PC-9 (cell line): ENCODE measurements at regions of chr9 and their contacts with region 1.

Region 1: GRCh38 chr9:4297151-4297785 is 2.6 kb downstream of the GLIS3 start:
- DNase-seq: peak; percentile 63 to 69
- H3K4me3 ChIP-seq: peak overlapping the region; percentile 90
- H3K27ac ChIP-seq: peak overlapping the region; percentile 94
- H3K4me1 ChIP-seq: peaks cover 48% of the 10 kb centered on the region
- H3K27me3 ChIP-seq: no peaks in the 10 kb centered on the region
- CTCF ChIP-seq: peak; percentile 57; the same call in 1 of the 2 replicates

Region 2: DNA sequence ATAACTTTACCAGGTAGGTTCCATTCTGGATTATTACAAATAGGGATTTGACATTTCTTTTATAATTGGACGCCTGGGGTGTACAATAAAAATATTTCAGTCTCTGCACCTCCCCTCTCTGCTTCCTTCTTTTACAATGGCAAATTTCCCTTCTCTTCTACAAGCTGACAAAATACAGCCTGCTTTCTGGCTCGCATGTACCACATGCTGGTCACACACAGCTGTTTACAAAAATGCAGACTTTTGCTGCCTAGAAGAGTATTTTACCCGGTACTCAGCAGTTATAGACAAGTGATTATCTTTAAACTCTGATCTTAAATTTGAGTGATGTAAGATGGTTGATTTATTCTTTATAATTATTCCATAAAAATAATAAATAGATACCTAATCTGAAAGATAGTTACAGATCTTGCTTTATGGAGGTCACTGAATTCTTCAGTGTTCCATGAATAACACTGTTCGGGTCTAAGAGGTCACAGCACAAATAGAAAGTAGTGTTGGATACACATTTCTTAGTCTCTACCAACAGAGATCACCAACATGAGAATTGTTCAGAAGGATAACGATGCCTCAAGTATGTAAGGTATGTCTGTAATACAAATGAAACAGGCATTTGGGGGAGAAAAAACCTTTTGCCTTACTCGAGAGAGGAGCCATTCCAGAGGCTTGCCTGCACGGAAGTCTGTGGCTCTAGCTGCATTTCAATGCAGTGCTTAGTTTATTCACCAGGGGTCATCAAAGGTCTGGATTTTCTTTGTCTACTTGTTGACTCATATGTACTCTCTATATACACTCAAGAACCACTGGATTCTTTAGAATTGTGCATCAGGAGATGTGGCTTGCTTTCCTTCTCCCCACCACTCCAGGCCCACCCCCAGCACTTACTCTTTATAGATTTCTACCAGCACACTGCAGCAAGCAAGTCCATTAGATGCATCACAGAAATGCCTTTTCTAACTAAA is 564.9 kb before region 1 on chr9:
- CTCF ChIA-PET with region 1: no interaction called
- POLR2A ChIA-PET with region 1: no interaction called
- intact Hi-C with region 1: loop called (anchors 5 kb)
- DNase-seq: peak; percentile 48 to 65
- H3K4me3 ChIP-seq: no peak overlapping the region
- H3K27ac ChIP-seq: no peak overlapping the region
- H3K4me1 ChIP-seq: peaks cover 9% of the 10 kb centered on the region; the same call in 1 of the 2 replicates
- H3K27me3 ChIP-seq: no peaks in the 10 kb centered on the region
- CTCF ChIP-seq: peak; percentile 73

Region 3: GRCh38 chr9:4038182-4038723 is 259.0 kb before region 1 on chr9:
- CTCF ChIA-PET with region 1: no interaction called
- POLR2A ChIA-PET with region 1: no interaction called
- intact Hi-C with region 1: loop called (anchors 10 kb)
- DNase-seq: peak in 1 of 2 experiments; percentile 82
- H3K4me3 ChIP-seq: no peak overlapping the region
- H3K27ac ChIP-seq: peak overlapping the region; percentile 69
- H3K4me1 ChIP-seq: peaks cover 29% of the 10 kb centered on the region
- H3K27me3 ChIP-seq: no peaks in the 10 kb centered on the region
- CTCF ChIP-seq: no peak

Region 4: GRCh38 chr9:4126180-4126865 is 170.9 kb before region 1 on chr9:
- CTCF ChIA-PET with region 1: no interaction called
- POLR2A ChIA-PET with region 1: interaction called, 30 read pairs
- intact Hi-C with region 1: loop called (anchors 1 kb)
- DNase-seq: peak in 1 of 2 experiments; percentile 76
- H3K4me3 ChIP-seq: no peak overlapping the region
- H3K27ac ChIP-seq: peak overlapping the region; percentile 89
- H3K4me1 ChIP-seq: peaks cover 29% of the 10 kb centered on the region
- H3K27me3 ChIP-seq: no peaks in the 10 kb centered on the region
- CTCF ChIP-seq: no peak

Region 5: DNA sequence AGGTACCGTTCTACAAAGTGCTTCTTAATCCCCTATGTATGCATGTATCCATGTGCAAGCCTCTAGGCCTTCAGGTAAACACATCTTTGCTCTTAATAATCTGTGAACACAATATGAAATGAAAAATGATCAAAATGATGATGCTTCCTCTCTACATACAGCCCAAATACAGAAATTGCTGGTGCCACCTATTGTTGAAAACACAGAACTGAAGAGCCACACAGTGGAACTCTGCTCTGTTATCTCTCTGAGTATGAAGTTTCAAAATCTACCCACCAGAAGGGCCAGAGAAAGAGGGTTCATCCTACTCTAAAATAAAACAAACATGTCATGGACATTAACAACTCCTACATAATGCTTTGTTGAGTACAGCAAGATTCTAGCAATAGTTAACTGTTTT is 68.7 kb before region 1 on chr9:
- CTCF ChIA-PET with region 1: no interaction called
- POLR2A ChIA-PET with region 1: no interaction called
- intact Hi-C with region 1: loop called (anchors 2 kb)
- DNase-seq: no peak
- H3K4me3 ChIP-seq: no peak overlapping the region
- H3K27ac ChIP-seq: no peak overlapping the region
- H3K4me1 ChIP-seq: peaks cover 13% of the 10 kb centered on the region; the same call in 1 of the 2 replicates
- H3K27me3 ChIP-seq: no peaks in the 10 kb centered on the region
- CTCF ChIP-seq: peak; percentile 55

Region 6: GRCh38 chr9:4262735-4263141 is 34.5 kb before region 1 on chr9:
- CTCF ChIA-PET with region 1: no interaction called
- POLR2A ChIA-PET with region 1: no interaction called
- intact Hi-C with region 1: loop called (anchors 1 kb)
- DNase-seq: peak; percentile 29 to 90
- H3K4me3 ChIP-seq: no peak overlapping the region
- H3K27ac ChIP-seq: peak overlapping the region; percentile 63
- H3K4me1 ChIP-seq: peaks cover 32% of the 10 kb centered on the region
- H3K27me3 ChIP-seq: no peaks in the 10 kb centered on the region
- CTCF ChIP-seq: no peak

Region 7: GRCh38 chr9:4327504-4328191 is 30.4 kb after region 1 on chr9:
- CTCF ChIA-PET with region 1: no interaction called
- POLR2A ChIA-PET with region 1: no interaction called
- intact Hi-C with region 1: no loop called
- DNase-seq: peak in 1 of 2 experiments; percentile 35
- H3K4me3 ChIP-seq: no peak overlapping the region
- H3K27ac ChIP-seq: no peak overlapping the region
- H3K4me1 ChIP-seq: no peaks in the 10 kb centered on the region
- H3K27me3 ChIP-seq: no peaks in the 10 kb centered on the region
- CTCF ChIP-seq: no peak

Region 8: GRCh38 chr9:4375424-4376200 is 78.3 kb after region 1 on chr9:
- CTCF ChIA-PET with region 1: no interaction called
- POLR2A ChIA-PET with region 1: no interaction called
- intact Hi-C with region 1: no loop called
- DNase-seq: no peak
- H3K4me3 ChIP-seq: no peak overlapping the region
- H3K27ac ChIP-seq: no peak overlapping the region
- H3K4me1 ChIP-seq: no peaks in the 10 kb centered on the region
- H3K27me3 ChIP-seq: no peaks in the 10 kb centered on the region
- CTCF ChIP-seq: peak; percentile 51

Region 9: GRCh38 chr9:4519604-4520003 is 222.3 kb after region 1 on chr9:
- CTCF ChIA-PET with region 1: no interaction called
- POLR2A ChIA-PET with region 1: no interaction called
- intact Hi-C with region 1: no loop called
- DNase-seq: no peak
- H3K4me3 ChIP-seq: no peak overlapping the region
- H3K27ac ChIP-seq: no peak overlapping the region
- H3K4me1 ChIP-seq: 0 out of 2 replicates have a peak, but pooled peaks cover 6% of the 10 kb centered on the region
- H3K27me3 ChIP-seq: no peaks in the 10 kb centered on the region
- CTCF ChIP-seq: no peak